ENCODE measurements at regions of chr2 and their contacts with region 1.

Region 1: GRCh38 chr2:102442967-102443828 is 20.2 kb downstream of the IL18RAP start:
- DNase-seq: peak; percentile 16
- H3K4me3 Mint-ChIP-seq: no peak overlapping the region
- H3K27ac Mint-ChIP-seq: no peak overlapping the region
- H3K4me1 Mint-ChIP-seq: no peaks in the 10 kb centered on the region
- H3K27me3 Mint-ChIP-seq: no peaks in the 10 kb centered on the region
- CTCF ChIP-seq: peak; percentile 28

Region 2: GRCh38 chr2:101419096-101419663 is 1024.0 kb before region 1 on chr2:
- CTCF ChIA-PET with region 1: no interaction called
- intact Hi-C with region 1: loop called (anchors 10 kb)
- DNase-seq: peak; percentile 67
- H3K4me3 Mint-ChIP-seq: no peak overlapping the region
- H3K27ac Mint-ChIP-seq: no peak overlapping the region
- H3K4me1 Mint-ChIP-seq: no peaks in the 10 kb centered on the region
- H3K27me3 Mint-ChIP-seq: no peaks in the 10 kb centered on the region
- CTCF ChIP-seq: peak; percentile 61

Region 3: GRCh38 chr2:102020596-102021181 is 422.5 kb before region 1 on chr2:
- CTCF ChIA-PET with region 1: no interaction called
- intact Hi-C with region 1: loop called (anchors 10 kb)
- DNase-seq: peak; percentile 90
- H3K4me3 Mint-ChIP-seq: no peak overlapping the region
- H3K27ac Mint-ChIP-seq: no peak overlapping the region
- H3K4me1 Mint-ChIP-seq: peaks cover 14% of the 10 kb centered on the region
- H3K27me3 Mint-ChIP-seq: no peaks in the 10 kb centered on the region
- CTCF ChIP-seq: peak; percentile 95

Region 4: GRCh38 chr2:102355526-102356380 is 87.4 kb before region 1 on chr2 and contains the start of gene IL18R1:
- CTCF ChIA-PET with region 1: no interaction called
- intact Hi-C with region 1: loop called (anchors 5 kb)
- DNase-seq: peak; percentile 87
- H3K4me3 Mint-ChIP-seq: peak within 1 kb of the TSS; percentile 84
- H3K27ac Mint-ChIP-seq: peak within 1 kb of the TSS; percentile 77
- H3K4me1 Mint-ChIP-seq: no peaks in the 10 kb centered on the region
- H3K27me3 Mint-ChIP-seq: peaks cover 14% of the 10 kb centered on the region
- CTCF ChIP-seq: peak; percentile 69
- total RNA-seq, gene IL18R1: 1.5 and 2.1 TPM in 2 replicates

Region 5: GRCh38 chr2:102806250-102806837 is 363.1 kb after region 1 on chr2:
- CTCF ChIA-PET with region 1: no interaction called
- intact Hi-C with region 1: loop called (anchors 1 kb)
- DNase-seq: peak; percentile 68
- H3K4me3 Mint-ChIP-seq: no peak overlapping the region
- H3K27ac Mint-ChIP-seq: no peak overlapping the region
- H3K4me1 Mint-ChIP-seq: no peaks in the 10 kb centered on the region
- H3K27me3 Mint-ChIP-seq: no peaks in the 10 kb centered on the region
- CTCF ChIP-seq: peak; percentile 59